Heart right ventricle (tissue), 16 donors: ENCODE measurements at regions of chr11 and their contacts with region 1.

Region 1: GRCh38 chr11:108967571-108967970 is 302.7 kb downstream of the DDX10 start:
- DNase-seq: peak; percentile 32 to 66
- ATAC-seq: peak; percentile 80 to 96 (median 92)
- H3K4me3 ChIP-seq: no peak overlapping the region
- H3K27ac ChIP-seq: peak overlapping the region; percentile 20 to 79 (median 66)
- H3K4me1 ChIP-seq: peaks cover 0 to 22% (median 0%) of the 10 kb centered on the region in 9 donors
- H3K27me3 ChIP-seq: no peaks in the 10 kb centered on the region
- CTCF ChIP-seq: no peak

Region 2: GRCh38 chr11:109071712-109072524 is 104.3 kb after region 1 on chr11:
- intact Hi-C with region 1: loop called in 3 of 10 experiments (anchors 1 to 10 kb)
- DNase-seq: peak in 1 of 2 donors; percentile 31
- ATAC-seq: peak; percentile 64 to 96 (median 88)
- H3K4me3 ChIP-seq: no peak overlapping the region
- H3K27ac ChIP-seq: peak overlapping the region in 9 of 10 donors; percentile 26 to 72 (median 56)
- H3K4me1 ChIP-seq: peaks cover 0 to 31% (median 17%) of the 10 kb centered on the region in 9 donors
- H3K27me3 ChIP-seq: no peaks in the 10 kb centered on the region
- CTCF ChIP-seq: no peak